ENCODE measurements at regions of chr19 and their contacts with region 1.

Region 1: DNA sequence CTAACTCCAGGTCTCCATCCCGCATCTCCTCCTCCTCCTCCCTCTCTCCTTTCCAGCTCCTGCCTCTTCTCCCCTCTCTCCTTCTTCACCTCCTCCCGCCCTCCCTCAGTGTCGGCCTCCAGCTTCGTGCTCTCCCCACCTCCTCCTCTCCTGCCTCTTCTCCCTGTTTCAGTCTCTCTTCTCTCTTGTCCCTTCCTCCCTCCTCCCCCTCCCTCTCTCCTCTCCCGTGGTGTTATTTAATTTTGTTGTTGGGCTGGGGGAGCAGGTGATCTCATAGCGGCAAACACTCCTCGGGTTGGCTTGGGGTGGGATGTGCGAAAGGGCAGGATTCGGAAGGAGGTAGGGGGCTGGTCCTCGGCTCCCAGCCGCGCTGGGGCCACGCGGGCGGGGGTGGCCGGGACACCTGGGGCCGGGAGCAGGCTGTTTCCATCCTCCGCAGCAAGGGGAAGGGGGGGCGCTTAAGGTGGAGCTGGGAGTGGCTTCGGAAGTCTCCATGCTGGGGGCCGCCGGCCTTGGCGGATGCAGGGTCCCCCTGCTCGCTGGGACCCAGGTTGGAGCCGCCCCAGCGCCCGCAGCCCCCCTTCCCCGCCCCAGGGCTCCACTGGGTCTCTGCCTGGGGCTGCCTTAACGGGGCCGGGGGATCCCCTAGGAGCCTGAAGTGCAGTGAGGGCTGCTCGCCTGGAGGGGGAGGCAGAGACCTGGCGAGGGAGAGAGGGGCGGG is at the start of gene CA11:
- DNase-seq: peak; percentile 87 to 97 (median 92)
- ATAC-seq: peak; percentile 84
- H3K4me3 ChIP-seq: peak within 1 kb of the TSS; percentile 58 to 98
- H3K4me3 Mint-ChIP-seq: peak within 1 kb of the TSS; percentile 93
- H3K27ac ChIP-seq: peak within 1 kb of the TSS; percentile 80 to 88
- H3K27ac Mint-ChIP-seq: peak within 1 kb of the TSS; percentile 99
- H3K4me1 ChIP-seq: peaks cover 32% of the 10 kb centered on the region
- H3K4me1 Mint-ChIP-seq: peaks cover 47% of the 10 kb centered on the region
- H3K27me3 ChIP-seq: no peaks in the 10 kb centered on the region
- H3K27me3 Mint-ChIP-seq: no peaks in the 10 kb centered on the region
- CTCF ChIP-seq: peak; percentile 77
- total RNA-seq, gene CA11: 10.3 to 11.2 TPM

Region 2: DNA sequence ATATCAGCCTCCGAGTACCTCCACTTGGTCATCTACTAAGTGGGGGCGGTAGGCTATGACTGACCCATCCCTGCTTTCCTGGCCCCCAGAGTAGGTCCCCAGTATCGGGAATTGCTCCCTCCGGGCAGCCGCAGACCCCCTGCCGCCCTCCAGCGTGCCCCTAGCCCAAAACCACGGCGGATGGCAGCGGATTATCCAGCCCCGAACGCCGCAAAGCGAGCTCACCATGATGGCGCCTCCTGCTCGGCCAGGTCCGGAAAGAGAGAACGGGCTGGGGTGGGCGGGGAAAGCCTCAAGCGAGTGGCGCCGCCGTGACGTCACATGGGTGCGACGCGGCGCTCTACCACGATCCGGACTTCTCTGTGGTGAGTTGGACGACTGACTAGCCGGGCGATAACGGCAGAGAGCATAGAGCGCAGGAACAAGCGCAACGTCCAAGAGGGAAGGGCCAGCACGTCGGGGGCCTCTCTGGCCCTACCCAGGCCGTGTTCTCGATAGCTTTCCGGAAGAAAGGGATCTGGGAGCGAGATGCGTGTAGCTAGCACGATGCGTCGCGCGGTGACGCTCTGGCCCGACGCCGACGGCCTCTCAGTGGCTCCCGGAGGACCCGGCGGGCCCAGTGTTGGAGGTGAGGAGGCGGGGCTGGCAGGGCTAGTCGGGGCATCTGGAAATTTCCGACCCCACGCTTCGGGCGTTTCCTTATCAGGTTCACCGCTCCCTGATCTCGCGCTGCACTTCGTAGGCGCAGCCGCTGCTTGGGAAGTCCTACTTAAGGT is 27.1 kb before region 1 on chr19 and contains the starts of genes RPL18 and SPHK2:
- CTCF ChIA-PET with region 1: interaction called, 5 read pairs
- POLR2A ChIA-PET with region 1: interaction called, 11 read pairs
- intact Hi-C with region 1: no loop called
- DNase-seq: peak; percentile 88 to 99 (median 94)
- ATAC-seq: peak; percentile 70
- H3K4me3 ChIP-seq: peak within 1 kb of the TSS; percentile 99
- H3K4me3 Mint-ChIP-seq: peak within 1 kb of the TSS; percentile 97
- H3K27ac ChIP-seq: peak within 1 kb of the TSS; percentile 92 to 94
- H3K27ac Mint-ChIP-seq: peak within 1 kb of the TSS; percentile 99
- H3K4me1 ChIP-seq: peaks cover 37% of the 10 kb centered on the region
- H3K4me1 Mint-ChIP-seq: peaks cover 57% of the 10 kb centered on the region
- H3K27me3 ChIP-seq: no peaks in the 10 kb centered on the region
- H3K27me3 Mint-ChIP-seq: no peaks in the 10 kb centered on the region
- CTCF ChIP-seq: no peak
- total RNA-seq, gene RPL18: 2,604 to 2,657 TPM
- total RNA-seq, gene SPHK2: 15.6 to 17.6 TPM

Region 3: DNA sequence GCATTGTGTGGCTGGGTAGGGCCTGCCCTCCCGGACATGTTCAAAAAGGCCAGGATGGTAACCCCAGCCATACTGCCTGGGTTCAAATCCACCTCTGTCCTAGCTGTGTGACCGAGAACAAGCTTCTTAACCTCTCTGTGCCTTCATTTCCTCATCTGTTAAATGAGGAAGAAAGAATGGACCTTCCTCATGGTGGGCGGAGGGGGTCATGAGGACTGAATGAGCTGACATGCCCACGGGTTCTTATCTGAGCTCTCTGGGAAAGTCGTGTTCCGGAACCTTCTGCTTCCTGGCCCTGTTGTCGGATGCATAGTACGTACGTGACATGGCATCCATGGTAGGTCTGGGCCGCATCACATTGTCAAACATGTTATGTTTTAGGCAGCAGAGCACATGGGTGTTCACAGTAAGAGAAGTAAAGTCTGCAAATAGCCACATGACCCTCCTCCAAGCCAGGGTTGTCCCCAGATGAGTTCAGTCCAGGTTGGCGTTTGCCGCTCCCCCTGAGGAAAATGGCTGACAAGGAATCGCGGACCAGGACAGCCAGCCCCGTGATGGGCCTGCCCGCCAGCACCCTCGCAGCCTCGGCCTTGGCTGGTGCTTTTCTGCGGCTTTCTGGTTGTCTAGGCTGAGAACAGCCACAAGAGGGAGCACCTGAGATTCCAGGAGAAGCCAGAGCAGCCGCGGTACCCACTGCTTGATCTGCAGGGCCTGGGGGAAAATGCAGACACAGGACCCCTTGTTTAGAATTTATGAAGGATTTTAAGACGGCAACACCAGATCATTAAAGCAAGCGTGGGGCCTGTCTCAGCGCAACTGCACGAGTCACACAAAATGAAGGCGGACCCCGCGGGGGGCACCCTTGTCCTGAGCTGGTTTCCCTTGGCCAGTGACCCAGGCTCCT is 29.0 kb after region 1 on chr19:
- CTCF ChIA-PET with region 1: interaction called, 39 read pairs
- POLR2A ChIA-PET with region 1: interaction called, 5 read pairs
- intact Hi-C with region 1: loop called (anchors 1 kb)
- DNase-seq: peak; percentile 56 to 88 (median 74)
- ATAC-seq: peak; percentile 98
- H3K4me3 ChIP-seq: no peak overlapping the region
- H3K4me3 Mint-ChIP-seq: no peak overlapping the region
- H3K27ac ChIP-seq: no peak overlapping the region
- H3K27ac Mint-ChIP-seq: peak overlapping the region; percentile 45
- H3K4me1 ChIP-seq: peaks cover 9% of the 10 kb centered on the region
- H3K4me1 Mint-ChIP-seq: peaks cover 6% of the 10 kb centered on the region
- H3K27me3 ChIP-seq: no peaks in the 10 kb centered on the region
- H3K27me3 Mint-ChIP-seq: no peaks in the 10 kb centered on the region
- CTCF ChIP-seq: peak; percentile 64

Region 4: GRCh38 chr19:48738557-48739399 is 92.6 kb after region 1 on chr19:
- CTCF ChIA-PET with region 1: interaction called, 15 read pairs
- POLR2A ChIA-PET with region 1: interaction called, 10 read pairs
- intact Hi-C with region 1: loop called (anchors 1 to 2 kb)
- DNase-seq: peak; percentile 78 to 95 (median 91)
- ATAC-seq: peak; percentile 93
- H3K4me3 ChIP-seq: peak overlapping the region in 1 of 2 experiments; percentile 52
- H3K4me3 Mint-ChIP-seq: peak overlapping the region; percentile 69
- H3K27ac ChIP-seq: no peak overlapping the region
- H3K27ac Mint-ChIP-seq: no peak overlapping the region
- H3K4me1 ChIP-seq: peaks cover 29% of the 10 kb centered on the region
- H3K4me1 Mint-ChIP-seq: peaks cover 17% of the 10 kb centered on the region
- H3K27me3 ChIP-seq: peaks cover 2 to 7% of the 10 kb centered on the region in 2 experiments
- H3K27me3 Mint-ChIP-seq: peaks cover 6% of the 10 kb centered on the region
- CTCF ChIP-seq: no peak

Region 5: DNA sequence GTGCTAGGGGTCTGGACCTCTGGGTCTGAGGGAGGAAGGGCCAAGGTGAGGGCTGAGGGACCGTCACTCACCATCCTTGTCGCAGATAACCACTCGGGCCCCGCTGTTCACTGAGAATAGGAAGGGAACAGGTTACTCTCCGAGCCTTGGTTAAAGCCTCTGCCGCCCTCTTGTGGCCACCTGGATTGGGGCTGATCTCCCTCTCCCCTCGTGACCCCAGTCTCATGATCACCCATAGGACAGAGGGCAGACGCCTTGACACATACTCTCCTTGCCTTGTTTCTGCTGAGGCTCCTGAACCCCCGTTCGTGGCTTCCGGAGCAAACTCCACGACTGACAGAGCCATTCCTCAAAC is 189.6 kb after region 1 on chr19:
- CTCF ChIA-PET with region 1: interaction called, 4 read pairs
- POLR2A ChIA-PET with region 1: no interaction called
- intact Hi-C with region 1: loop called (anchors 1 to 2 kb)
- DNase-seq: peak; percentile 87 to 96 (median 92)
- ATAC-seq: peak; percentile 86
- H3K4me3 ChIP-seq: peak overlapping the region; percentile 42 to 51
- H3K4me3 Mint-ChIP-seq: peak overlapping the region; percentile 83
- H3K27ac ChIP-seq: no peak overlapping the region
- H3K27ac Mint-ChIP-seq: peak overlapping the region; percentile 50
- H3K4me1 ChIP-seq: peaks cover 22% of the 10 kb centered on the region
- H3K4me1 Mint-ChIP-seq: peaks cover 20% of the 10 kb centered on the region
- H3K27me3 ChIP-seq: peaks cover 0 to 5% of the 10 kb centered on the region in 2 experiments
- H3K27me3 Mint-ChIP-seq: peaks cover 5% of the 10 kb centered on the region
- CTCF ChIP-seq: peak; percentile 66

Region 6: GRCh38 chr19:48970923-48971395 is 324.8 kb after region 1 on chr19:
- CTCF ChIA-PET with region 1: no interaction called
- POLR2A ChIA-PET with region 1: no interaction called
- intact Hi-C with region 1: loop called (anchors 2 to 10 kb)
- DNase-seq: peak; percentile 67 to 91 (median 86)
- ATAC-seq: peak; percentile 91
- H3K4me3 ChIP-seq: no peak overlapping the region
- H3K4me3 Mint-ChIP-seq: no peak overlapping the region
- H3K27ac ChIP-seq: no peak overlapping the region
- H3K27ac Mint-ChIP-seq: no peak overlapping the region
- H3K4me1 ChIP-seq: peaks cover 10% of the 10 kb centered on the region
- H3K4me1 Mint-ChIP-seq: peaks cover 19% of the 10 kb centered on the region
- H3K27me3 ChIP-seq: no peaks in the 10 kb centered on the region
- H3K27me3 Mint-ChIP-seq: no peaks in the 10 kb centered on the region
- CTCF ChIP-seq: peak; percentile 84

Measured in CD8-positive, alpha-beta T cell (primary cell).